A549 (cell line): ENCODE measurements at regions of chr9 and their contacts with region 1.

Region 1: DNA sequence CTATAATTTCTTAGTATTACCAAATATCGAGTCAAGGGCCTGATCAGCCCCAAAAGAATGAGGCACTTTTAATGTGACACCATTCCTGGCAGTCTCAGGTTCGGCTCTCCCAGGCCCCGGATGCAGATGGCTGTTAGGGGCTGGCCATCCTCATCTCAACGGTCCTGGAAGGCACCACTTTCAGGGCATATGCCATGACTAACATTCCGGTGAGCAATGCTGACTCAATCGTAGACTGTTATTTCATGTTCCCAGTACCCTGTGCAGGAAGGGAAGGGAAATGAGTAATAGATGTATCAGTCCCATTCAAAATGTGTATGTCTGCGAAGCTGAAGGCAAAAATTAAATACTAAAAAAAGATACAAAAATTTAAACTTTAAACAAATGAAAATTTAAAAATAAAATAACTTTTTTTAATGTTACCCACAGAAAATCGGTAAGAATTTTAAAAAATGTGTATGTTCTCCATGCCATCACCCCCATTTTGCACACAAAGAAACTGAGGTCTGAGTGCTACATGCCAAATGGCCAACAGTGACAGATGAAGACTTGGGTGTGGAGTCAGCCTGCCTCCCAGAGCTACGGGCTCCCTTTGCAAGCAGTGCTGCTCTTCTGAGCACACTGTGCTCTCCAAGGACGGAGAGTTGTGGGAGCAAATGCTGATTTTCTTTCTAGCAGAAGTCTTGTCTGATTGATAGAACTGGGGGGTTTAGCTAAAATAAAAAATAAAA is 79.0 kb downstream of the GLDC start:
- DNase-seq: peak; percentile 89 to 90
- ATAC-seq: peak; percentile 94 to 95
- H3K4me3 ChIP-seq: peak overlapping the region; percentile 15; the same call in 2 of the 3 replicates
- H3K27ac ChIP-seq: peak overlapping the region; percentile 93 to 94
- H3K4me1 ChIP-seq: peaks cover 25% of the 10 kb centered on the region
- CTCF ChIP-seq: no peak
- EP300 ChIP-seq: peak in 1 of 2 experiments; percentile 47; a peak in 2 of 5 replicates
- POLR2A ChIP-seq: no peak
- RAD21 ChIP-seq: no peak

Region 2: GRCh38 chr9:6353851-6354686 is 212.5 kb before region 1 on chr9:
- CTCF ChIA-PET with region 1: interaction called, 70 read pairs
- POLR2A ChIA-PET with region 1: no interaction called
- DNase-seq: peak; percentile 69 to 77
- ATAC-seq: peak; percentile 89 to 98
- H3K4me3 ChIP-seq: no peak overlapping the region
- H3K27ac ChIP-seq: no peak overlapping the region
- H3K4me1 ChIP-seq: peaks cover 15% of the 10 kb centered on the region
- CTCF ChIP-seq: peak; percentile 85
- EP300 ChIP-seq: no peak
- POLR2A ChIP-seq: no peak
- RAD21 ChIP-seq: peak; percentile 84 to 85

Region 3: DNA sequence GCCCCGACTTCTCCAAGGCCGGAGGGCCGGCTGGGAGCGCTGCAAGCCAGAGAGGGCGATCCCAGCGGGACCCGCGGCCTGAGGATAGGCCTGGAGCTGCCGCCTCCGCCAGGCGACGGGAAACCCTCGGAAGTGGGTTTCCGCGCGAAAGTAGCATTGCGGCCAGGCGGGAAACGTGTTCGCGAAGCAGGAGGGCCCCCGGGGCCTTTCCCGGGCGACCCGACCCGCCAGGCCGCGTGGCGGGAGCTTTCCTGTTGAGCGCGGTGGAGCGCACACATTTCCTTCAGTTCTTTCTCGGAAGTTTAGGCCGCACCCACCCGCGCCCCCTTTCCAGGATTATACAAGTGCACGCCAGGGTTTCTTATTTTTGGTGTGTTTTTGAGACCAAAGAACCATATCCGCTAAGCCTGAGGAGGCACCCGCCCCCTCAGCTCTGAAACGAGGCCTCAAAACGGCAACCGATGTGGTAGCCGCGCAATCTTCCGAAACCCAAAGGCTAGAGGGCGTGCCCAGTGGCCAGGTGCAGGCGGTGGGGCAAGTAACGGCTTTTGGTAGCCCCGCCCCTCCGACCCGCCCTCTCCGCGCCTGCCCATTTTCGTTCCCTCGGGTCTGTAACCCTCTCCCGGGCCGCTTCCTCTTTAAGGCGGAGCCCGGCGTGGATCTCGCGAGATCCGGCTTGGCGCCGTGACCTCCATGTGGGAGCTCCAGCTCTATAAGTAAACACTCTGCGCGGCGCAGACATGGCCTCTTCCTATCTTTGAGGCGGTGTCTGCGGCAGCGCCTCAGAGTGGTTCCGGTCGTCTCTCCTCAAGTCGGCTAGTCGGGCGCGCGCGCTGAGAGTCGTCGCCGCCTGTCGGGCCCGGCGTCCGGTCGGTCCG is 153.8 kb before region 1 on chr9 and contains the start of gene UHRF2:
- CTCF ChIA-PET with region 1: interaction called, 6 read pairs
- POLR2A ChIA-PET with region 1: interaction called, 19 read pairs
- DNase-seq: peak; percentile 94 to 98
- ATAC-seq: peak; percentile 96 to 98
- H3K4me3 ChIP-seq: peak within 1 kb of the TSS; percentile 94
- H3K27ac ChIP-seq: peak within 1 kb of the TSS; percentile 91 to 96
- H3K4me1 ChIP-seq: peaks cover 17% of the 10 kb centered on the region
- CTCF ChIP-seq: no peak
- EP300 ChIP-seq: no peak
- POLR2A ChIP-seq: peak; percentile 72
- RAD21 ChIP-seq: no peak
- polyA plus RNA-seq, gene UHRF2: 60.6 and 74.3 TPM in 2 replicates